ENCODE measurements at regions of chr6 and their contacts with region 1.

Region 1: GRCh38 chr6:103122766-103123601 is 1729.5 kb downstream of the GRIK2 start:
- DNase-seq: peak; percentile 72
- H3K4me3 ChIP-seq: no peak overlapping the region
- H3K27ac ChIP-seq: no peak overlapping the region
- H3K4me1 ChIP-seq: no peaks in the 10 kb centered on the region
- CTCF ChIP-seq: peak; percentile 86

Region 2: DNA sequence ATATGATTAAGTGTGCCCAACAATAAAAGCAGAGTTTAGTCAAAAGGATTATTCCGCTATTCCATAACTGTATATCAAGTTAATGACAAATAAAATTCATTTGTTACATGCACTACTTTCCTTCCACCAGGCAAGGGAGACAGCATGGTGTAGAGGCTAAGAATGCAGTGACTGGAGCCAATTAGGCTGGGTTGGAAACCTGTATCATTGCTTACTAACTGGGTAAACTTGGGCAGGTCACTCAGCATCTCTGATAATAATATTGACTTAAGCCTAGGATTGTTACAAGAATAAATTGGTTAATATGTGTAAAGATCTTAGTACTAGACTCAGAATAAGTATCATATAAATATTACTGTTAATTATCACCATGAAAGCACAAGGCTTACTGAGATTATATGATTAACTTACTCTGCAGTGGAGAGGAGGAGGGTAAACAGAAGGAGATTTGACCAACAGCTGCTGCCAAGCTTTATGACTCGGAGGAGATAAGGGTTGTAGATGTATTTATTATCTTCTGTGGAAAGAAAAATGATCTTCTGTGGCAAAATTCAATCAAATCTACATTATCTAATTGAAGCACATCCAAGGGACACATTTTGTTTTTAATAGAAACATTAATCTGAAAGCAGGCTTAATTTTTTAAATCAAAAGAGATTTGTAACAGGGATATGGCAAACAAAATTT is 269.6 kb before region 1 on chr6:
- CTCF ChIA-PET with region 1: interaction called, 3 read pairs
- POLR2A ChIA-PET with region 1: interaction called, 3 read pairs
- intact Hi-C with region 1: loop called (anchors 2 kb)
- DNase-seq: no peak
- H3K4me3 ChIP-seq: no peak overlapping the region
- H3K27ac ChIP-seq: no peak overlapping the region
- H3K4me1 ChIP-seq: no peaks in the 10 kb centered on the region
- CTCF ChIP-seq: no peak

Region 3: DNA sequence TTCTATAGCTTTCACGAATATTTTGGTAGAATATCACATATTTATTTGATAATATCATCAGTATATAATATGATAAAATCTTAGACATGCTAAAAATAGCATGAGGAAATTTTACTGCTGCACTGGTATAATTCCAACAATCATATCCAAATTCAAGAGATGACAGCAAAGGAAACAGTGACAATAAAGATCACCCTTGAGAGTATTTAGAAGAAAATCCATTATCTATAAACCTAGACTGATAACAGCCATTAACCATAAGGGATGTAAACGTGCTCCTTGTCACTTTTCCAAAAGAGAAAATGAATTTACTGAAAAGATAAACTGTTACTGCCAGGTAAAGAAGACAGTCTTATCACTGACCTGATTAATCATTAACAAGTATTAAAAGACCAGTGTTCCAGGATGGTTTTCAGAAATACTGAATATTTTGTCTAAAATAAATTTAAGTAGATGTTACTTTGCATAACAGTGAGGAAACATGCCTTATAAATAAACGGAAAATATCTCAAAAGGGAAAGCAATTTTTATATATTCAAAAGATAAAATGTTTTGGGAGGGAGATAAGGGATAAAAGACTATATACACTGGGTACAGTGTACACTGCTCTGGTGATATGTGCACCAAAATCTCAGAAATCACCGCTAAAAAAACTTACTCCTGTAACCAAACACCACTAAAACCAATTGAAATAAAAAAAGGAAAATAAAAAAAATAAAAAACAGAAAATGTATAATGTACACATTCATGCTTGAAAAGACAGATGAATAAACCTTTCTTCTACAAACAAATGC is 32.0 kb after region 1 on chr6:
- CTCF ChIA-PET with region 1: no interaction called
- POLR2A ChIA-PET with region 1: no interaction called
- intact Hi-C with region 1: no loop called
- DNase-seq: no peak
- H3K4me3 ChIP-seq: no peak overlapping the region
- H3K27ac ChIP-seq: no peak overlapping the region
- H3K4me1 ChIP-seq: no peaks in the 10 kb centered on the region
- CTCF ChIP-seq: no peak

Measured in OCI-LY7 (cell line).